Mammary epithelial cell (primary cell): ENCODE measurements at regions of chr17 and their contacts with region 1.

Region 1: DNA sequence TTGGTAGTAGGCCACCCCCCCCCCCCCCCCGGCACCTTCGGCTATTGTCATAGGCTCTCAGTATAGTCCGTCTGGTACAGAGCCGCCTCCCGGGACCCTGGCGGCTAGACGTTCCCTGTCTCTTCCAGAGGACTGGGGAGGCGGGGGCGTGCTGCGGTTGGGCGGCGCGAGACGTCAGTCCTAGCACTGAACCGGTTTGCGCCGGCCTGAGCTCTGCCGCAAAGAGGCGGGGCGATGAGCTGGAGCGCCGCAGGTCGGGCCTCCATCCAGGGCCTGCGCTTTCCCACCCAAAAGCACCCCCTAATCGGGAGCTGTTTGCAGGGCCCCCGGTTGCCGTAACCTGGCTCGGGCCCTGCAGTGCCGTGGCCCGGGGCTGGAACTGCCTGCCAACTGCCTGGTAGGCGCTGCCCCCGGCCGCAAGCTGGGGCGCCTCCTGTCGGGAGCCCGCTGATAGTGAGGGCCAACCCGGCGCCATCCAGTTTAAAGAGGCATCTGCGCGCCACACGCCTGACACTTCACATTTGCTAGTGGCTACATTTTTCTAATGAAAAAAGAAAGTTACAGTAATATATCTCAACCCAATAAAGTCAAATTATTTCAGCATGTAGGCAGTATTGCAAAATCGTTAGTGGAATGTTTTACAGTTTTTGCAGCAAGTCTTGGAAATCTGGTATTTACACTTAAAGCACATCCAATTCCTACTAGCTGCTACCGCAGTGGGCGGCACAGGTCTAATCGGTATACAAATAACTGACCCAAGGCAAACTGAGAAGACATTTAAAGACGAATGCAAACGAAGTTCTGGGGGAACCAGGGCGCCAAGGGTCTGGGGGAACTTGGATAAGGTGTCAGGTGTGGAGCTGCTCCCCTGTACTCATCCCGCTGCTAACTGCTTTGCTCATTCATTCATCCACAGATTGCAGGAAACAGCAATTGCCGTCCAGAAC is 748 bp upstream of the USP22 start:
- DNase-seq: peak; percentile 97
- H3K4me3 ChIP-seq: peak overlapping the region; percentile 59 to 78 (median 63)
- H3K27ac ChIP-seq: peak overlapping the region; percentile 55
- H3K4me1 ChIP-seq: peaks cover 20% of the 10 kb centered on the region
- H3K27me3 ChIP-seq: no peaks in the 10 kb centered on the region
- CTCF ChIP-seq: peak; percentile 81 to 91

Region 2: GRCh38 chr17:20944014-20944865 is 99.3 kb before region 1 on chr17:
- CTCF ChIA-PET with region 1: no interaction called
- dilution Hi-C with region 1: no loop called
- in situ Hi-C with region 1: no loop called
- intact Hi-C with region 1: loop called (anchors 5 kb)
- DNase-seq: peak; percentile 57
- H3K4me3 ChIP-seq: no peak overlapping the region
- H3K27ac ChIP-seq: no peak overlapping the region
- H3K4me1 ChIP-seq: no peaks in the 10 kb centered on the region
- H3K27me3 ChIP-seq: no peaks in the 10 kb centered on the region
- CTCF ChIP-seq: peak; percentile 60 to 91

Region 3: GRCh38 chr17:21072745-21073197 is 29.2 kb after region 1 on chr17:
- CTCF ChIA-PET with region 1: no interaction called
- dilution Hi-C with region 1: no loop called
- in situ Hi-C with region 1: no loop called
- intact Hi-C with region 1: no loop called
- DNase-seq: no peak
- H3K4me3 ChIP-seq: no peak overlapping the region
- H3K27ac ChIP-seq: no peak overlapping the region
- H3K4me1 ChIP-seq: peaks cover 10% of the 10 kb centered on the region
- H3K27me3 ChIP-seq: no peaks in the 10 kb centered on the region
- CTCF ChIP-seq: no peak

Region 4: DNA sequence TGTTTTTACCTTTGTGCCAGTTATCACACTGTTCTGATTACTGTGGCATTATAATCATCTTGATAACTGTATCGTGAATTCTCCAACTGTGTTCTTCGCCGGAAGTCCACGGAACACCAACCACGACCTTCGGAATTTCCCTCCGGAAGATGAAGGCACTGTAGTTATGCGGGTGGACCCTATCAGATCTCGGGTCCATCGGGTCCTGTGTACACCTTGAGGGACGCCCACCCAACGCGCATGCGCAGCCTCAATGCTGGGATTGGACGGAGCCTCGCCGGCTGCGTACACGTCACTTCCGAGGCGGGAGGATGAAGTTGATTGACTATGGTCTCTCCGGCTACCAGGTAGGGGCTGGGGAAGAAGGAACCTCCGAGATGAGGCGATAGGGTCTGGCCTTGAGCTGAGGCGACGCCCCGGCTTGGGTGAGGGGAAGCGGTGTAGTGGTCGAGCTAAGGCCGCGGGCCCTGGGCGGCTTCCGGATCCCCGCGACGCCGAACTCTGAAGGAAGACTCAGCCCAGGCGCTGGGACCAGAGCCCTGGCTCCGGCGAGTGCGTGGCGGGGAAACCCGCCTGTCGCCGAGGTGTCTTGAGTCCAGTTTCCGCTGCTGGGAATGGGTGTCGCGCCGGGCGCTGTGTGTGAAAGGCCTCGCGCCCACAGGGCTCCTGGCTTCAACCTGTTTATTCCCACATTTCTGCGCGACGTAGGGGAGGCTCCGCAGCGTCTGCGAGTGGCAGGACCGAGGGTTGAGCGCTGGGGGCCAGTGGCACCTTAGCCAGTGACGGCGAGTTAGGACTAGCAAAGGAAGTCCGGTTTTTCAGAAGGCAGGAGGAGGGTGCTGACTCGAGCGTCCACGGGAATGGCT is 83.3 kb after region 1 on chr17 and contains the start of gene DHRS7B:
- CTCF ChIA-PET with region 1: no interaction called
- dilution Hi-C with region 1: no loop called
- in situ Hi-C with region 1: no loop called
- intact Hi-C with region 1: loop called (anchors 5 kb)
- DNase-seq: peak; percentile 95
- H3K4me3 ChIP-seq: peak within 1 kb of the TSS; percentile 63 to 97 (median 71)
- H3K27ac ChIP-seq: peak within 1 kb of the TSS; percentile 71
- H3K4me1 ChIP-seq: peaks cover 12% of the 10 kb centered on the region
- H3K27me3 ChIP-seq: no peaks in the 10 kb centered on the region
- CTCF ChIP-seq: peak in 1 of 2 donors; percentile 14
- total RNA-seq, gene DHRS7B: 27.3 to 29.5 TPM

Region 5: DNA sequence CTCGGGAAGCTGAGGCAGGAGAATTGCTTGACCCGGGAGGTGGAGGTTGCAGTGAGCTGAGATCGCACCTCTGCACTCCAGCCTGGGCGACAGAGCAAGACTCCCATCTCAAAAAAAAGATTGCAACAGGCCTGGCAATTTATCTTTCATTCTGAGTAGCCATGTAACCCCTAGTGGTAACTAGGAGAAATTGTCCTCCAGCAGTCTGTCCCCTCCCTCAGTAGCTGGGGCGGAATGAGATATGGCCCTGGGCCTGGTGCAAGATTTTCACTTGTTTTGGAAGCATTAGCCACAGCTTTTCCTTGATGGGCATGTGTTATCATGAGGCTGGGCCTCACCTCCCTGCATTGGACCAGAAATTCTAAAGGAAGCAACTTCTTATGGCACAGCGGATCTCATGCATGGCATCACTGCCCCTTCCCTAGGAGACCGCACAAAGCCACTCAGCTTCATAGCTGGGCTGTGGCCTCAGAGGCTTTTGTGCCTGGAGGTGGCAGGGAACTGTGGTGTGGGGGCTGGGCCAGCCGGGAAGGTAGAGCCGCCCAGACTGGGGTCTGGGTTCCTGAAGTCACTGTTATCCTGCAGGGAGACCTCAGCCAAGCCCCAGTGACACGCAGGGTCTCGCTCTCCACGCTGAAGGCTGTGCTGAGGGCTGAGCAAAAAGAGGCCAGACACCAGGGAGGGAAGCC is 196.3 kb after region 1 on chr17:
- CTCF ChIA-PET with region 1: interaction called, 15 read pairs
- dilution Hi-C with region 1: no loop called
- in situ Hi-C with region 1: no loop called
- intact Hi-C with region 1: no loop called
- DNase-seq: no peak
- H3K4me3 ChIP-seq: no peak overlapping the region
- H3K27ac ChIP-seq: no peak overlapping the region
- H3K4me1 ChIP-seq: peaks cover 9% of the 10 kb centered on the region
- H3K27me3 ChIP-seq: no peaks in the 10 kb centered on the region
- CTCF ChIP-seq: peak; percentile 20 to 45

Region 6: GRCh38 chr17:21511363-21512198 is 468.0 kb after region 1 on chr17:
- CTCF ChIA-PET with region 1: no interaction called
- dilution Hi-C with region 1: no loop called
- in situ Hi-C with region 1: no loop called
- intact Hi-C with region 1: loop called (anchors 5 kb)
- DNase-seq: peak; percentile 66
- H3K4me3 ChIP-seq: peak overlapping the region; percentile 45 to 47 (median 46)
- H3K27ac ChIP-seq: no peak overlapping the region
- H3K4me1 ChIP-seq: peaks cover 13% of the 10 kb centered on the region
- H3K27me3 ChIP-seq: peaks cover 5% of the 10 kb centered on the region
- CTCF ChIP-seq: peak; percentile 28 to 79